Gastrocnemius medialis (tissue), 4 donors: ENCODE measurements at regions of chr16 and their contacts with region 1.

Region 1: DNA sequence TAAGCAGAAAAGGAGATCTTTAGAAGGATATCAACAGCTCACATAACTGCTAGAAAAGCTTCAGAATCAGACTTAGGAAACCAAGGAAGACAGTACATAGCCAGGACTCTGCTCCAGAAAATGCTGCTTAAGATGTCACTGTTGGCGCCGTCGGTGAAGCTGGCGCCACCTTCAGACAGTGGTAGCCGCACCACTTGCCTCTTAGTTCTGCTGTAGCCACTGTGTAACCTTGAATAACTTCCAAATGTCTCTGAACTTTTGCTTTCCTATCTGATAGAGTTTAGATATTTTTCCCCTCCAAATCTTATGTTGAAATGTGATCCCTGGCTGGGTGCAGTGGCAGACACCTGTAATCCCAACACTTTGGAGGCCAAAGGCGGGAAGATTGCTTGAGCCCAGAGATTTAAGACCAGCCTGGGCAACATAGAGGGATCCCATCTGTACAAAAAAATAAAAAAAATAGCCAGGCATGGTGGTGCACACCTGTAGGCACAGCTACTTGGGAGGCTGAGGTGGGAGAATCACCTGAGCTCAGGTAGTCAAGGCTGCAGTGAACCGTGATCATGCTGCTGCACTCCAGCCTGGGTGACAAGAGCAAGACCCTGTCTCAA is 6.3 kb upstream of the USP31 start:
- DNase-seq: no peak
- ATAC-seq: peak in 1 of 2 donors; percentile 54
- H3K4me3 ChIP-seq: no peak overlapping the region
- H3K27ac ChIP-seq: no peak overlapping the region
- H3K4me1 ChIP-seq: no peaks in the 10 kb centered on the region
- H3K27me3 ChIP-seq: no peaks in the 10 kb centered on the region
- CTCF ChIP-seq: peak in 2 of 5 experiments; percentile 23 to 28
- POLR2A ChIP-seq: no peak

Region 2: DNA sequence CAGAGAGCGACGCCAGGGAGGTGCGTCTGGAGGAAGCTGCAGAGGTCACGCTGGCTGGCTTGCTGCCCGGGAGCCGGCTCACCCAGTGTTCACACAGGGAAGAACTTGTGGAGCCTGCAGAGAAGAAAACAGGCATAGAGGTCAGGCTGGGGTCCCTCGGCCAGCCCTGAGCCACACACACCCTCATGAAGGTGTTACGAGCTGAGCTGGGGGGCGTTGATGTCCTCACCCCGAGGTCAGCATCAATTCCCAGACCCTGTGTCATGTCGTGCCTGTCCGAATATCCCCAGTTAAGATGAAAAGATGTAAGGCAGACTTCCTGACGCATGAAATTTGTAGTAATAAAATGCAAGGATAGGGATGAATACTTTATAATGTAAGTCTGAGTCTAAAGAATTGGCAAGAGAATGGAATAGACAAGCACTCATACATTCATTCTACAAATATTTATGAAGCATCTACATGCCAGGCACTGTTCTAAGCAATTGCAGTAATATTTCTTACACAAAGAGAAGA is 83.4 kb before region 1 on chr16:
- in situ Hi-C with region 1: loop called in 1 of 4 experiments (anchors 10 kb)
- intact Hi-C with region 1: no loop called
- DNase-seq: peak; percentile 67 to 79
- ATAC-seq: peak; percentile 70 to 77
- H3K4me3 ChIP-seq: peak overlapping the region in 1 of 4 donors; percentile 14
- H3K27ac ChIP-seq: peak overlapping the region in 3 of 4 donors; percentile 72 to 83 (median 80)
- H3K4me1 ChIP-seq: peaks cover 0 to 21% of the 10 kb centered on the region in 2 donors
- H3K27me3 ChIP-seq: no peaks in the 10 kb centered on the region
- CTCF ChIP-seq: no peak
- POLR2A ChIP-seq: no peak